MCF 10A (cell line): ENCODE measurements at regions of chr5 and their contacts with region 1.

Region 1: DNA sequence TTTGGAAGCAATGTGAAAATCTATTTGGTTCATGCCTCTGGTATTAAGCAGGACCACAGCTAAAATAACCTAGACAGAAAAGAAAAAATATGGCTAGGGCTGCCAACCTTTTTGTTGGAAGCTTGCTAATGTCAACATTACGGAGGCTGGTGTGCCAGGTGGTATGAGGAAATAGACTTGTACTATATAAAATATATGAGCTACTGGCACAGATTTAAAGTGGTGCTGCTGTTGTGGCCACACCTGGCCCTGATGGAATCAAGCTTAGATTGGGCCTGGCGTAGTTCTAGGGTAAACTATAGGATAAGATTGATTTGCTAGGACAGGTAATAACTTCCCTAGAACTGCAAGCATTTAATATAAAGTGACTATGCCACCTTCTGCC is 10.6 kb upstream of the PARP8 start:
- DNase-seq: peak; percentile 88
- H3K4me3 Mint-ChIP-seq: peak overlapping the region; percentile 4
- H3K27ac Mint-ChIP-seq: no peak overlapping the region
- H3K4me1 Mint-ChIP-seq: peaks cover 23% of the 10 kb centered on the region
- H3K27me3 Mint-ChIP-seq: no peaks in the 10 kb centered on the region
- CTCF ChIP-seq: no peak

Region 2: GRCh38 chr5:50667653-50668595 is 12.1 kb after region 1 on chr5:
- CTCF ChIA-PET with region 1: no interaction called
- POLR2A ChIA-PET with region 1: interaction called, 12 read pairs
- intact Hi-C with region 1: no loop called
- DNase-seq: peak; percentile 64
- H3K4me3 Mint-ChIP-seq: peak overlapping the region; percentile 88
- H3K27ac Mint-ChIP-seq: peak overlapping the region; percentile 99
- H3K4me1 Mint-ChIP-seq: no peaks in the 10 kb centered on the region
- H3K27me3 Mint-ChIP-seq: no peaks in the 10 kb centered on the region
- CTCF ChIP-seq: no peak